ENCODE measurements at regions of chr13 and their contacts with region 1.

Region 1: GRCh38 chr13:48653472-48653939 is at the start of gene CYSLTR2:
- DNase-seq: peak in 7 of 9 donors; percentile 63 to 89 (median 81)
- ATAC-seq: peak; percentile 89
- H3K4me3 ChIP-seq: peak within 1 kb of the TSS; percentile 49
- H3K4me3 Mint-ChIP-seq: peak within 1 kb of the TSS; percentile 77 to 98 (median 86)
- H3K27ac ChIP-seq: peak within 1 kb of the TSS; percentile 82
- H3K27ac Mint-ChIP-seq: peak within 1 kb of the TSS; percentile 86 to 99 (median 94)
- H3K4me1 ChIP-seq: peaks cover 11 to 26% of the 10 kb centered on the region in 2 donors
- H3K4me1 Mint-ChIP-seq: peaks cover 22 to 65% (median 56%) of the 10 kb centered on the region in 7 donors
- H3K27me3 ChIP-seq: no peaks in the 10 kb centered on the region
- H3K27me3 Mint-ChIP-seq: peaks cover 0 to 2% (median 0%) of the 10 kb centered on the region in 5 donors
- total RNA-seq, gene CYSLTR2: 2.1 to 6.5 (median 3.5) TPM

Region 2: DNA sequence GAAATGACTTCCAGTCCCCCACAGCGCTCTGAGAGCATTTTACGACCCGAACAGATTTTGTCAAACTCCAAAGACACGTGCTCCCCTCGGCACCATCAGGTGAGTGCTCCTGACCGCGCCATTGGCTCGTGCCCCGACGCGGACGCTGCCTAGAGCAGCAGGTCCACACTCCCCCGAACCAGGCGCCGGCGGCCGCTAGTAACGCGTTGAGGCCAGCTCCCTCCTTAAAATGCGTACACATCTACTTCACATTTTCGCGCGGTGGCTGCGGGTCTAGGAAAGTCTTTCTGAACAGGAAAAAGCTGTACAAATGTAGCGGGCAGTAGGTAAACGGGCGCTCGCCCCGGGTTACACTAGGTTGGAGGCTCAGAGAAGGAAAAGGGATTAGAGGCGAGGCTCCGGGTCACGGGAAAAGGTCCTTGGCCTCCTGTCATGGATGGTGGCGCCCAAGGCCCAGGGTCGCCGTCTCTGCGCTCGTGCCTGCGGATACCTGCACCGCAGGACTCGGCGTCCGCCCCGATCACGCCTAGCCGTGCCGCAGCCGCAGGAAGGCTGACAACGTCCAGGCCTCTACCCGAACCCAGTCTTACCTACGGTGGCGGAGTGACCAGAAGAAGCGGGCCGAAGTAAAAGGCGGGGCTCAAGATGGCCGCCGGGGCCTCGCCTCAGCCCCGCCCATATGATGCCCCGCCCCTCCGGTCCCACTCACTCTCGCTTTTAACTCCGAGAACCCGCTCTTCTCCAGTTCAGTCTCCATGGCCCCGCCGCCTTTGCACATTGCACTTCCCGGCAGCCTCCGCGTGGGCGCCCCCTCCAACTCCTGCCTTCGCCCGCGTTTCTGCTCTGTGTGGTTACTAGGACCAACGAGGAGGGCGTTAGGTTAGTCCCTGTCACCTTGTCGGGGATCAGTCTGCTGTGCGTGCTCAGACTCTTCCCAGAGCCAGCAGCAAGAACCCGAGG is 1856.7 kb before region 1 on chr13 and contains the start of gene ESD:
- CTCF ChIA-PET with region 1: no interaction called
- POLR2A ChIA-PET with region 1: no interaction called
- intact Hi-C with region 1: loop called in 1 of 2 experiments (anchors 10 kb)
- DNase-seq: peak; percentile 75 to 92 (median 85)
- ATAC-seq: peak; percentile 97
- H3K4me3 ChIP-seq: peak within 1 kb of the TSS; percentile 85
- H3K4me3 Mint-ChIP-seq: peak within 1 kb of the TSS; percentile 91 to 99 (median 93)
- H3K27ac ChIP-seq: peak within 1 kb of the TSS; percentile 82
- H3K27ac Mint-ChIP-seq: peak within 1 kb of the TSS; percentile 92 to 99 (median 98)
- H3K4me1 ChIP-seq: peaks cover 14 to 33% of the 10 kb centered on the region in 2 donors
- H3K4me1 Mint-ChIP-seq: peaks cover 20 to 53% (median 48%) of the 10 kb centered on the region in 7 donors
- H3K27me3 ChIP-seq: no peaks in the 10 kb centered on the region
- H3K27me3 Mint-ChIP-seq: peaks cover 0 to 7% (median 0%) of the 10 kb centered on the region in 5 donors
- total RNA-seq, gene ESD: 35.3 to 80.1 (median 57.0) TPM

Region 3: DNA sequence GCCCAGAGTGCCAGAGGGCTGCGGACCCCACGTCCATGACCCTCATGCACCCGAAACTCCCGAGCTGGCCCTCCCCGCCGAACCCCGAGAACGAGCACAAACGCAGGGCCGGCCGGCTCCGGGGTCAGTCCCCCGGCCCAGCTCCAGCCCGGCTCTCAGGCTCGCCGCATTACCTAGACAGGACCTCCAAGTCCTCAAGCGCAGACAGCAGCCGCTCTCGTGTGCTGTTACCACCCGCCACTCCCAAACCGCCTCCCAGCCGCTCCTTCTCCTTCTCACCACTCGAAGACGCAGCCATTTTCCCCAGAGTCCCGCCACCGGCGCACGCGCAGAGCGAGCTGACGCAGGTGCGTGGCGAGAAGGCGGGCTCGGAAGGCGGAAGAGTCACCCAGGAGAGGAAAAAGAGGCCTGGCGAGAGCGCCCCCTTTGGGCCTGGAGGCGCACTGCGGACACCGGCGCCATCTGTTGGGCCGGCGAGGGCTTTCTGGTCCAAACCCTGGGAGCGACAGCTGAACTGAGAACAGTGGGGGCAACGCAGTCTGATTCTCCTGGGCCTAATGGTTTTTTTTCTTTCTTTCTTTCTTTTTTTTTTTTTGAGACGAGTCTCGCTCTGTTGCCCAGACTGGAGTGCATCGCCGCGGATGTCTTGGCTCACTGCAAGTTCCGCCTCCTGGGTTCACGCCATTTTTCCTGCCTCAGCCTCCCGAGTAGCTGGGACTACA is 558.6 kb before region 1 on chr13 and contains the start of gene MED4:
- CTCF ChIA-PET with region 1: no interaction called
- POLR2A ChIA-PET with region 1: no interaction called
- intact Hi-C with region 1: loop called (anchors 2 to 10 kb)
- DNase-seq: peak; percentile 94 to 99 (median 98)
- ATAC-seq: peak; percentile 100
- H3K4me3 ChIP-seq: peak within 1 kb of the TSS; percentile 90
- H3K4me3 Mint-ChIP-seq: peak within 1 kb of the TSS; percentile 94 to 99 (median 96)
- H3K27ac ChIP-seq: peak within 1 kb of the TSS; percentile 99
- H3K27ac Mint-ChIP-seq: peak within 1 kb of the TSS; percentile 92 to 98 (median 96)
- H3K4me1 ChIP-seq: peaks cover 13 to 26% of the 10 kb centered on the region in 2 donors
- H3K4me1 Mint-ChIP-seq: peaks cover 26 to 56% (median 48%) of the 10 kb centered on the region in 7 donors
- H3K27me3 ChIP-seq: no peaks in the 10 kb centered on the region
- H3K27me3 Mint-ChIP-seq: peaks cover 0 to 9% (median 0%) of the 10 kb centered on the region in 5 donors
- total RNA-seq, gene MED4: 43.4 to 60.9 (median 50.0) TPM

Region 4: DNA sequence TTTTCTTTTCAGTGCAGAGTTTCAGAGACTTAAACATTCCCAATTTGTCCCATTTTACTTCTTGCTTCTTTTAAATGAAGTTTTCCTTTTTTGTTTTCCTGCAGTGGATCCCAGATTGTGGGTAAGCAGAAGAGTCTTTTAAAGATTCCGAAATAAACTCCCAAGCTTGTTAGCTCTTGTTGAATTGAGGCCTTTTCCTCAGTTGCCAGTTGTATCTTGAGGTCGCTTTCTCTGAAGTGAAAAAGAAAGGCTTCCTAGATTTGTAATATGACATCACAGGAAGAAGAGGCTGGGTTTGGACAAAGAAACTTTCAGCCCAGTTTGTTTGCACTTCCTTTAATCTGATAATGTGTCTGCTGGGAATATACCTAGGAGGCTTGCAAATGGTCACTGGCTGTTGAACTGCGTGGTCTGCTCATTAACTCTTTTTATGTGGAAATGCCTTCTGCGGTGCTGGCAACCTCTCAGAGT is 240.6 kb before region 1 on chr13 and contains the start of gene LPAR6:
- CTCF ChIA-PET with region 1: no interaction called
- POLR2A ChIA-PET with region 1: interaction called, 4 read pairs
- intact Hi-C with region 1: loop called in 1 of 2 experiments (anchors 5 kb)
- DNase-seq: peak in 7 of 9 donors; percentile 30 to 55 (median 47)
- ATAC-seq: peak; percentile 67
- H3K4me3 ChIP-seq: peak within 1 kb of the TSS; percentile 73
- H3K4me3 Mint-ChIP-seq: peak within 1 kb of the TSS; percentile 86 to 100 (median 98)
- H3K27ac ChIP-seq: peak within 1 kb of the TSS; percentile 90
- H3K27ac Mint-ChIP-seq: peak within 1 kb of the TSS; percentile 92 to 100 (median 94)
- H3K4me1 ChIP-seq: peaks cover 9 to 19% of the 10 kb centered on the region in 2 donors
- H3K4me1 Mint-ChIP-seq: peaks cover 19 to 47% (median 40%) of the 10 kb centered on the region in 7 donors
- H3K27me3 ChIP-seq: no peaks in the 10 kb centered on the region
- H3K27me3 Mint-ChIP-seq: no peaks in the 10 kb centered on the region
- total RNA-seq, gene LPAR6: 24.1 to 60.4 (median 32.8) TPM

Region 5: GRCh38 chr13:48562296-48563066 is 91.0 kb before region 1 on chr13:
- CTCF ChIA-PET with region 1: no interaction called
- POLR2A ChIA-PET with region 1: no interaction called
- intact Hi-C with region 1: loop called in 1 of 2 experiments (anchors 1 kb)
- DNase-seq: peak in 8 of 9 donors; percentile 67 to 87 (median 79)
- ATAC-seq: peak; percentile 100
- H3K4me3 ChIP-seq: peak overlapping the region; percentile 12
- H3K4me3 Mint-ChIP-seq: peak overlapping the region in 9 of 10 donors; percentile 0 to 68 (median 54)
- H3K27ac ChIP-seq: no peak overlapping the region
- H3K27ac Mint-ChIP-seq: peak overlapping the region in 2 of 9 donors; percentile 71 to 82
- H3K4me1 ChIP-seq: peaks cover 22 to 31% of the 10 kb centered on the region in 2 donors
- H3K4me1 Mint-ChIP-seq: peaks cover 28 to 51% (median 36%) of the 10 kb centered on the region in 7 donors
- H3K27me3 ChIP-seq: no peaks in the 10 kb centered on the region
- H3K27me3 Mint-ChIP-seq: peaks cover 7 to 67% (median 13%) of the 10 kb centered on the region in 5 donors

Region 6: DNA sequence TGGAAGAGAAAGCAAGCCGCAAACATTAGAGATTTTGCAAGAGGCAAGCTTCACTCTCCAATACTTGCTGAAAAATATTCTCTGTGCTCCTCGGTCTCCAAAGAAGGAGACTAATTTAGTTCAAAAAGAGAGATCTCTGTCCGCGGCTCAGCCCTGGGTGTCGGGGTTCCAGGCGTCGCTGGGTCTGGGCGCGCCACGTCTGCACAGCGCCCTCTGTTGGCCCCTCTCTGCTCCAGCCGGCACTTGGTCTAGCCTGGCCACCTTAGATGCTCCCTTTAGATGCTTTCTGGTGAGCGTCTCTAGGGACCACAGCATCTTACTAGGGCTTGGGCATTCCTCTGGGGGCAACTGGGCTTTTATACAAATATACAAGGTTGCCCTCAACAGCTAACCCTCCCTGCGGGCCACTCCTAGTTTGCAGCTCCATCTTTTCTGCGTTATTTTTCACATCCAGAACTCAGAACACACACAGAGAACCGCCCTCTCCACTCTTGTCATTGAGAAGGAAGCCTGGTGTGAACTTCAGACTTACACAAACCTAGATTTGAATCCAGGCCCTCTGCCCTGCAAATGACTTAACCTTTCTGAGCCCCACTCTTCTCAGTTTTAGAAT is 78.6 kb after region 1 on chr13:
- CTCF ChIA-PET with region 1: no interaction called
- POLR2A ChIA-PET with region 1: no interaction called
- intact Hi-C with region 1: loop called (anchors 2 to 5 kb)
- DNase-seq: peak; percentile 25 to 59 (median 51)
- ATAC-seq: peak; percentile 88
- H3K4me3 ChIP-seq: peak overlapping the region; percentile 31
- H3K4me3 Mint-ChIP-seq: peak overlapping the region; percentile 56 to 85 (median 78)
- H3K27ac ChIP-seq: no peak overlapping the region
- H3K27ac Mint-ChIP-seq: peak overlapping the region in 1 of 9 donors; percentile 57
- H3K4me1 ChIP-seq: no peaks in the 10 kb centered on the region
- H3K4me1 Mint-ChIP-seq: peaks cover 0 to 12% (median 6%) of the 10 kb centered on the region in 7 donors
- H3K27me3 ChIP-seq: peaks cover 0 to 4% of the 10 kb centered on the region in 2 donors
- H3K27me3 Mint-ChIP-seq: peaks cover 0 to 5% (median 4%) of the 10 kb centered on the region in 5 donors

Region 7: GRCh38 chr13:50123862-50124536 is 1470.5 kb after region 1 on chr13:
- CTCF ChIA-PET with region 1: no interaction called
- POLR2A ChIA-PET with region 1: no interaction called
- intact Hi-C with region 1: loop called in 1 of 2 experiments (anchors 10 kb)
- DNase-seq: peak in 7 of 9 donors; percentile 46 to 88 (median 64)
- ATAC-seq: peak; percentile 82
- H3K4me3 ChIP-seq: peak overlapping the region; percentile 52
- H3K4me3 Mint-ChIP-seq: peak overlapping the region; percentile 86 to 96 (median 93)
- H3K27ac ChIP-seq: peak overlapping the region; percentile 95
- H3K27ac Mint-ChIP-seq: peak overlapping the region; percentile 90 to 99 (median 97)
- H3K4me1 ChIP-seq: peaks cover 24 to 29% of the 10 kb centered on the region in 2 donors
- H3K4me1 Mint-ChIP-seq: peaks cover 25 to 61% (median 50%) of the 10 kb centered on the region in 7 donors
- H3K27me3 ChIP-seq: peaks cover 0 to 11% of the 10 kb centered on the region in 2 donors
- H3K27me3 Mint-ChIP-seq: peaks cover 1 to 15% (median 12%) of the 10 kb centered on the region in 5 donors